Endothelial cell of umbilical vein (primary cell): ENCODE measurements at regions of chr2 and their contacts with region 1.

Region 1: DNA sequence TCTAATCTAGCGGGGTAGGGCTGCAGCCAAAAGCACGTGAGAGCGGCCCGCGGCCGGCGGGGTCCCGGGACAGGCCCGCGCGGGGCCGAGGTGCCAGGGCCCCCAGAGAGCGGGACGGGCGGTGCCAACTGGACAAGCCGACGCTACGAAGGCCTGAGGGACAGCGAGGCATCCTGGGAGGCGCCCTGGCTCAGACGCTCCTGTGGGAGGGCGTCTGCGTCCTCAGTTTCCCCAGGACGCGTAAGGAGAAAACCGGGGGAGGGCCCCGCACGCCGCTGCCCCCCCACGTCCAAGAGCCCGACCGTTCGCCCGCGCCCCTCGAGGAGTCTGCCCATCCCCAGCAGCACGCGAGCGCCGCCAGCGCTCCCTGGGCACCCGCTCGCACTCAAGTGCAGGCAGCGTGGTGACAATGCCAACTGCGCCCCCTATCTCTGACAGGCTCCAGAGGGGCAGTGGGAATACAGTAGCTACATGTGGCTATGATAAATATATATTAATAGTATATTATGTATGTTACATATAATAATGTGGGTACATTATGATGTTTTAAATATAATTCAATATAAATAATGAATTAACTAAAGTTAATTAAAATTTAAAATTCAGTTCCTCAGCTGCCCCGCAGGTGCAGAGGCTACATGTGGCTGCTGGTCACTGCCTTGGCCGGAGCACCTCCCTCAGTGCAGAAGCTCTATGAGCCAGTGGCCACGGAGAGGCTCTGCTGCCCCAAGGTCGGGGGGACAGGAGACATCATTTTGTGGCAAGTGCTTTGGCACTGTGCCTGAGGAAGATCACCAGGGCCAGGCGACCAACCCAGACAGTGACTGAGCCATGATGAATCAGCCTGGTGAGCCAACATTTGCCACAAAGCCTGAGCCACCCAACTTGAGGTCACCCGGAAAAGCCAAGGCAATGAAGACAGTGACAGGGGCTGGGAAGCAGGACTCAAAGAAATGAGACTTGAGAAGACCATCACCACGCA is 5.5 kb upstream of the SFT2D3 start:
- DNase-seq: peak; percentile 75
- H3K4me3 ChIP-seq: peak overlapping the region in 2 of 3 experiments; percentile 21 to 22
- H3K27ac ChIP-seq: no peak overlapping the region
- H3K4me1 ChIP-seq: peaks cover 8% of the 10 kb centered on the region
- H3K27me3 ChIP-seq: no peaks in the 10 kb centered on the region
- CTCF ChIP-seq: peak; percentile 60 to 73
- POLR2A ChIP-seq: no peak

Region 2: GRCh38 chr2:127305990-127306585 is 389.7 kb before region 1 on chr2:
- CTCF ChIA-PET with region 1: no interaction called
- POLR2A ChIA-PET with region 1: no interaction called
- dilution Hi-C with region 1: no loop called
- intact Hi-C with region 1: no loop called
- DNase-seq: no peak
- H3K4me3 ChIP-seq: no peak overlapping the region
- H3K27ac ChIP-seq: no peak overlapping the region
- H3K4me1 ChIP-seq: no peaks in the 10 kb centered on the region
- H3K27me3 ChIP-seq: no peaks in the 10 kb centered on the region
- CTCF ChIP-seq: no peak
- POLR2A ChIP-seq: no peak

Region 3: GRCh38 chr2:127437781-127438726 is 257.7 kb before region 1 on chr2:
- CTCF ChIA-PET with region 1: no interaction called
- POLR2A ChIA-PET with region 1: no interaction called
- dilution Hi-C with region 1: no loop called
- intact Hi-C with region 1: no loop called
- DNase-seq: no peak
- H3K4me3 ChIP-seq: no peak overlapping the region
- H3K27ac ChIP-seq: no peak overlapping the region
- H3K4me1 ChIP-seq: no peaks in the 10 kb centered on the region
- H3K27me3 ChIP-seq: no peaks in the 10 kb centered on the region
- CTCF ChIP-seq: no peak
- POLR2A ChIP-seq: no peak

Region 4: DNA sequence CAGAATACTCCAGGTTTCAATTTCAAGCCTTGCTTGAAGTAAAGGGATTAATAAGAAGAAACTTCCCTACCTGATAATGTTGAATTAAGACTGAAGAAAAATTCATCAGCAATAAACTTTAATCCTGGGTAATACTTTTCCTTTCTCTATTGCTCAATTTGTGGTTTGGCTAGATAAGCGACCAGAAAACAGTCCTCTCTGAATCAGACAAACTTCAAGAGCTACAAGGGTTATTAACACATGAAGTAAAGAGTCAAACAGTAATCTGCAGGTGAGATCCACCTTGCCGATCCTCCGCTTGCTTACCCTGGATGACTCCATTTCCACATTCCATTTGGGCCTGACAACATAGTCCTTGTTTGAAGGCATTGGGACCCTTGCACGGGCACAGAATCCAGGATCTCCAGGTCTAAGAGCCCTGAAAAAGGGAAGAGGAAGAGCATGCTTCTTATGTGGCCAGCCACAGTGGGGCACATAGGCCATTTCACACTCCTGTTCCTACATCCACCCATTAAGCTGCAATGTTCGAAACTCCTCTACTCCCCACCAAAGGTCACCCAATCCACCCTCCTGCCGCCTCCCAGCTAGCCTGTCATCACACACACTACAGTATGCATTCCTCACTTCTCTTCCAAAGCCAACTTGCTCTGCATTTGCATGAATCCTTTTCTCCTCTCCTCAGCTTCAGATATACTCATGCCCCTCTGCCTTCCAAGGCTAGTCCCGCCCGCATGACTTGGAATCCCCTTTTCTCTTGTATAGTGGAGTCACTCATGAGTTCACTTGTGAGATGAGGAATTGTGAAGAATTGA is 209.3 kb before region 1 on chr2:
- CTCF ChIA-PET with region 1: no interaction called
- POLR2A ChIA-PET with region 1: no interaction called
- dilution Hi-C with region 1: no loop called
- intact Hi-C with region 1: no loop called
- DNase-seq: no peak
- H3K4me3 ChIP-seq: no peak overlapping the region
- H3K27ac ChIP-seq: no peak overlapping the region
- H3K4me1 ChIP-seq: no peaks in the 10 kb centered on the region
- H3K27me3 ChIP-seq: no peaks in the 10 kb centered on the region
- CTCF ChIP-seq: no peak
- POLR2A ChIP-seq: no peak

Region 5: DNA sequence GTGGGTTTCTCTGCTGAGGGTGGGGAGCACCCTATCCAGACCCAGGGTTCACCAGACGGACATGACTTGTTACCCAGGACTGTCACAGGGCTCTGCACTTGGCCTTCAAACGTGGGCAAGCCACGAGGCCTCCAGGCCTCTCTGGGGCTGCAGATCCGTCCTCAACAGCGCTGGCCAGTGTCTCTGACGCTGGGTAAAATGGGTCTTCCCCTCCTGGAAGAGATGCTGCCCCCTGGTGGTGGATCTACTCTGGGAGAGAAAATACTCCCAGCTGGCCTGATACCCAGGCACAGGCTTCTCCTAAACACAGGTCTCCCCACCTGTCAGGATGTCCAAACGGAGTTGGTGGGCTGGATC is 46.1 kb before region 1 on chr2:
- CTCF ChIA-PET with region 1: interaction called, 24 read pairs
- POLR2A ChIA-PET with region 1: no interaction called
- dilution Hi-C with region 1: no loop called
- intact Hi-C with region 1: no loop called
- DNase-seq: peak; percentile 69
- H3K4me3 ChIP-seq: no peak overlapping the region
- H3K27ac ChIP-seq: no peak overlapping the region
- H3K4me1 ChIP-seq: peaks cover 25% of the 10 kb centered on the region
- H3K27me3 ChIP-seq: no peaks in the 10 kb centered on the region
- CTCF ChIP-seq: peak; percentile 85 to 88
- POLR2A ChIP-seq: no peak

Region 6: GRCh38 chr2:127681288-127681804 is 14.4 kb before region 1 on chr2:
- CTCF ChIA-PET with region 1: interaction called, 39 read pairs
- POLR2A ChIA-PET with region 1: no interaction called
- dilution Hi-C with region 1: no loop called
- intact Hi-C with region 1: no loop called
- DNase-seq: peak; percentile 47
- H3K4me3 ChIP-seq: no peak overlapping the region
- H3K27ac ChIP-seq: no peak overlapping the region
- H3K4me1 ChIP-seq: peaks cover 12% of the 10 kb centered on the region
- H3K27me3 ChIP-seq: no peaks in the 10 kb centered on the region
- CTCF ChIP-seq: no peak
- POLR2A ChIP-seq: no peak